A673 (cell line): ENCODE measurements at regions of chr6 and their contacts with region 1.

Region 1: DNA sequence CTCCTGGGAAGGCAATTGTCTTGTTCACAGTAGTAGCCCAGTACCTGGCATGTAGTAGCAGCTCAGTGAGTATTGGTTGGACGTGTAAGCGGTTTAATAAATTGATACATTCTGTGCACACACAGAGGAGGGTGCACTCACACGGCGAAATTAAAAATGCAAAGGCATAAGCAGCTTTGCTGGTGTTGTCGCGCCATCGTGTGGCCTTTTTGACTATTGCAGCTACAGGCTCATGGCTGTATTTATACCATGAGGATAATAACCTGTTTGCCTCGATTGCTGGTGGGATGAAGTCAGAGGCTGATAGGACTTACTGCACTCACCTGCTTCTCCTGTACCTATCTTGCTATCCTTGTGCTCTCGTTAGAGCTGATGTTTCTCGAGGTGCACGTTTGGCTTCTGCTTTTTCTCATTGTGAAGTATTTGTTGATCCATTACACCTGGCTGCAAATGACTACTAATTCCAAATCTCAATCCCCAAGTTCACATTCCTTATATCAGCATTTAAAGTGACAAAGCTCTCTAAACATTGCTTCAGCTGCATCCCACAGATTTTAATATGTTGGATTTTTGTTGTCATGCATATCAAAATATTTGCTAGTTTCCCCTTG is 61.5 kb downstream of the TBXT start:
- DNase-seq: peak; percentile 74
- H3K4me3 ChIP-seq: no peak overlapping the region
- H3K27ac ChIP-seq: no peak overlapping the region
- H3K4me1 ChIP-seq: no peaks in the 10 kb centered on the region
- H3K27me3 ChIP-seq: peaks cover 24% of the 10 kb centered on the region
- CTCF ChIP-seq: peak; percentile 92

Region 2: GRCh38 chr6:165439928-165440554 is 666.1 kb before region 1 on chr6:
- CTCF ChIA-PET with region 1: no interaction called
- POLR2A ChIA-PET with region 1: no interaction called
- intact Hi-C with region 1: loop called (anchors 2 kb)
- DNase-seq: peak; percentile 41
- H3K4me3 ChIP-seq: no peak overlapping the region
- H3K27ac ChIP-seq: no peak overlapping the region
- H3K4me1 ChIP-seq: no peaks in the 10 kb centered on the region
- H3K27me3 ChIP-seq: no peaks in the 10 kb centered on the region
- CTCF ChIP-seq: peak; percentile 65

Region 3: DNA sequence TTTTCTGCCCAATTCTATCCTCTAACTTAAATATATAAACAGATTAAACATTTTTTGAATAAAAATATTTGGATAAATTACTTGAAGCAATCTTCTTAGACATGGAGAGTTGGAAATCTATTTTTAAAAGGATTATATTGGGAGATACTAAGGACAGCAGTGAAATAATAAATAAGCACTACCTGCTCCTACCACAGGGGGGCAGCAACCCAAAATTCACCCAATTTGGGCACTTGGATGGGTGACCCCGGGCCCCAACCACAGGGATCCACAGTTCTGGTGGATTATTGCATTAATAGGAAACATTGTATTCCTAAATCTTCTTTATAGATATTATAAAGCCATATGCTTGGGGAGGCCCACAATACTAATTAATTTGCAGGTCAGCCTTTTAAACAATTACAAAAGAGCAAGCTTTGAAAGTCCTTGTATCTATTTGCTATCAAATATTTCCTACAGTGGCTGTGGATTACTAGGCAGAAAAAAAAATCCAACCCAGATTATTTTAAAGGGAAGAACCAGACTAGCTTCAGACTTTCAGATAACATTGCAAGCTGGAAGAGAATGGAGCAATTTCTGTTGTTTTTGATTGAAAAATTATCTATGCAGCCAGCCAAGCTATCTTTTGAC is 376.8 kb before region 1 on chr6:
- CTCF ChIA-PET with region 1: no interaction called
- POLR2A ChIA-PET with region 1: no interaction called
- intact Hi-C with region 1: loop called (anchors 2 kb)
- DNase-seq: peak; percentile 41
- H3K4me3 ChIP-seq: no peak overlapping the region
- H3K27ac ChIP-seq: no peak overlapping the region
- H3K4me1 ChIP-seq: no peaks in the 10 kb centered on the region
- H3K27me3 ChIP-seq: peaks cover 37% of the 10 kb centered on the region
- CTCF ChIP-seq: peak; percentile 86

Region 4: GRCh38 chr6:165884813-165885765 is 221.1 kb before region 1 on chr6:
- CTCF ChIA-PET with region 1: interaction called, 15 read pairs
- POLR2A ChIA-PET with region 1: no interaction called
- intact Hi-C with region 1: loop called (anchors 1 kb)
- DNase-seq: peak; percentile 87
- H3K4me3 ChIP-seq: no peak overlapping the region
- H3K27ac ChIP-seq: no peak overlapping the region
- H3K4me1 ChIP-seq: no peaks in the 10 kb centered on the region
- H3K27me3 ChIP-seq: peaks cover 1% of the 10 kb centered on the region
- CTCF ChIP-seq: peak; percentile 95

Region 5: GRCh38 chr6:166127624-166128472 is 21.7 kb after region 1 on chr6:
- CTCF ChIA-PET with region 1: interaction called, 14 read pairs
- POLR2A ChIA-PET with region 1: no interaction called
- intact Hi-C with region 1: no loop called
- DNase-seq: no peak
- H3K4me3 ChIP-seq: no peak overlapping the region
- H3K27ac ChIP-seq: no peak overlapping the region
- H3K4me1 ChIP-seq: no peaks in the 10 kb centered on the region
- H3K27me3 ChIP-seq: peaks cover 50% of the 10 kb centered on the region
- CTCF ChIP-seq: no peak